GM13976 (cell line): ENCODE measurements at regions of chr12 and their contacts with region 1.

Region 1: GRCh38 chr12:77734214-77734883 is 96.3 kb upstream of the NAV3 start:
- DNase-seq: no peak
- CTCF ChIP-seq: no peak

Region 2: GRCh38 chr12:77339610-77340009 is 394.7 kb before region 1 on chr12:
- in situ Hi-C with region 1: no loop called
- DNase-seq: no peak
- CTCF ChIP-seq: no peak

Region 3: DNA sequence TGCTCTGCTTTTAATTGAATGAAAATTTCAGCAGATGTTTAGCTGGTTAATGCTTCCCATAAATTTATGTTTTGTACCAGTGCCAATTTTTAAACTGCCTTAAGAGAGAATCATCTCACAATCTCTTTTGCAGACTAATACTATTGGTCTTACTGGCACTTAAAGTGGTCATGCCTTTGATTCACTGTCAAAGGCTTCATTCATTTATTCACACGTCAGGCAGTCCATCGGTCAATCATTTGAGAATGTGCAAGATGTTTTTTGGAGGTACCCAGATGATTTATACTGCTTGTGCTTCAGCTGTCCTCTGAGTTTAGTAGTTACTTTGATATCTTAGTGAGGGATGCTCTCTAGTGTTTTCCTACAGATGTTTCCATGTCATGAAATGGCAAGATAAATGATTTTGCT is 179.7 kb after region 1 on chr12:
- in situ Hi-C with region 1: loop called (anchors 10 kb)
- DNase-seq: no peak
- CTCF ChIP-seq: no peak